Astrocyte of the cerebellum (primary cell): ENCODE measurements at regions of chr7 and their contacts with region 1.

Region 1: DNA sequence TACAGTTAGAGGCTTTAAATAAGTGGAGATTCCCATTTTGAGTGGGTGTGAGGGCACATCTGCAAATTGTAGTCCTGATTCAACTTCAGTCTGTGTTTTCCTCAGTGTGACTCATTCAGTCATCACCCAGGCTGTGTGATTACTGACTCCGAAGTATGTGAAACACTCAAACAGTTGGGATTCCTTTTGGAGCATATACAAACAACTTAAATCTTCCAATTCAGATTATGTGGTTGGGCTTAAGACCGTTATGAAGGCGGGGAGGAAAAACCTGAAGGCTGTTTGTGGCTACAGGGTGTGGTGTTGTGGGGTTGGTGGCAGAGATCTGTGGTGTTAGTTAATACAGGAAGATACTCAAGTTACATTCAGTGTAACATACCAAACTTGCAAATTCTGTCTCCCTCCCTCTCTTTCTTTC is 259.7 kb upstream of the FERD3L start:
- DNase-seq: peak; percentile 97
- H3K4me3 ChIP-seq: no peak overlapping the region
- CTCF ChIP-seq: no peak

Region 2: GRCh38 chr7:19455623-19456022 is 50.7 kb after region 1 on chr7:
- in situ Hi-C with region 1: loop called (anchors 5 kb)
- DNase-seq: no peak
- H3K4me3 ChIP-seq: no peak overlapping the region
- CTCF ChIP-seq: no peak